ENCODE measurements at regions of chr10 and their contacts with region 1.

Region 1: DNA sequence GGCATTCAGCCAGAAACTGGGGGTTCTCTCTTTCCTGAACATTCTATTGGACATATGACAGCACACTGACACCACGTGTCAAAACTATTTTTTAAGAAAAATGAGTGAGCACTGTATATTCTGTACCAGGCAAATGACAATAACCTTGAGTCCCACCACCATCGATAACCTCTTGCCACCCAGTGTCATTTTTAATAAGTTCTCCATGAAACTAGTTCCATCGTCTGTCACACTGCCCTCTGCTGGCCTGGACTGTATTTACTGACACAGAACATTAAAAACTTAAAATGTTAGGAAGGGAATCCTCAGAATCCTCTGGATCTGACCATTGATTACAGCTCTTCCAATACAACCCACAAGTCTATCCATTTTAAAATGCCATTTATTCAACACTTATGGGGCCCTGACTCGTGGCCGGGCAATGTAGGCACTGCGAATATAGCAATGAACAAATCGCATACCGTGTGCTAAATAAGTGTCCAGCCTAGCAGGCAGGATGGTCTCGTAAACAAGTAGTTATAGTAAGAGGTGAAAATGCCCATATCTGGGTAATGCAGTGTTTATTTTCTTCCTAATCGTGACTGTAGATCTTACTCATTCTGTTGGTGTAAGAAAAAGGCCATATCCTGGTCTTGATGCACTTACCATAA is 35.9 kb upstream of the CACNB2 start:
- DNase-seq: peak in 1 of 2 donors; percentile 71
- H3K4me3 ChIP-seq: peak overlapping the region in 1 of 2 donors; percentile 37
- H3K27ac ChIP-seq: peak overlapping the region in 1 of 2 donors; percentile 23
- H3K4me1 ChIP-seq: no peaks in the 10 kb centered on the region
- H3K27me3 ChIP-seq: no peaks in the 10 kb centered on the region
- CTCF ChIP-seq: peak; percentile 67 to 78

Region 2: GRCh38 chr10:17607603-17608332 is 496.6 kb before region 1 on chr10:
- intact Hi-C with region 1: loop called (anchors 5 kb)
- DNase-seq: no peak
- H3K4me3 ChIP-seq: no peak overlapping the region
- H3K27ac ChIP-seq: peak overlapping the region in 1 of 2 donors; percentile 29
- H3K4me1 ChIP-seq: peaks cover 0 to 29% (median 0%) of the 10 kb centered on the region in 4 donors
- H3K27me3 ChIP-seq: no peaks in the 10 kb centered on the region
- CTCF ChIP-seq: peak; percentile 90 to 93

Region 3: DNA sequence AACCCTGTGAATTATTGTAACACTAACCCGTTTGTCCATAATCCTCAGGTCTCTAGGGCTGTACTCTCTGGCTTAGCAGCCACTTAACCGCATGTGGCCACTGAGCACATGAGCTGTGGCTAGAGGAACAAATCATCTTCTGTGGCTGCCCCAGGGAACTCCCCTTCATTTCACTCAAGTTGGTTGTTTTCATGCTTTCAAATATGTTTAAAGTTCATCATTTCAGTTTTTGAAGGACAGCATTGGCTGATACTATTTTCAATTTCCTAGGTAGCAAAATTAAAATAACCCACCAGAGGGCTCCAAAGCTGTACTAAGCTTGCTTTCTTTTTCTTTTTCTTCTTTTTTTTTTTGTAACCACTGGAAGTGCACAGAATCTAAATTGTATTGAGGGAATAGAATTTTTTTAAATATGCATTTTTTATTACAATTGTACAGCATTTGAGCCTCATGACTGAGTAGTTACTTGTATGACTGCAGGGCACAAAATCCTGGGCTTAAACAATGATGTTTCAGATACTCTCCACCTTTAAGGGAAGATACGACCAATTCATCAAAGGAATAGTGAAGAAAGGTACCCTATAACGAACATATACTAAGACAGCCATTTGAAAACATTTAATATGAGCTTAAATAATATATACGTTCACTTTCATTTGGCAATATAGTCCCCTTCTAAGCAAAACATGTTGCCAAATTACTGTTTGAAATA is 256.6 kb before region 1 on chr10:
- intact Hi-C with region 1: loop called (anchors 10 kb)
- DNase-seq: no peak
- H3K4me3 ChIP-seq: no peak overlapping the region
- H3K27ac ChIP-seq: no peak overlapping the region
- H3K4me1 ChIP-seq: no peaks in the 10 kb centered on the region
- H3K27me3 ChIP-seq: no peaks in the 10 kb centered on the region
- CTCF ChIP-seq: peak; percentile 41 to 44

Region 4: DNA sequence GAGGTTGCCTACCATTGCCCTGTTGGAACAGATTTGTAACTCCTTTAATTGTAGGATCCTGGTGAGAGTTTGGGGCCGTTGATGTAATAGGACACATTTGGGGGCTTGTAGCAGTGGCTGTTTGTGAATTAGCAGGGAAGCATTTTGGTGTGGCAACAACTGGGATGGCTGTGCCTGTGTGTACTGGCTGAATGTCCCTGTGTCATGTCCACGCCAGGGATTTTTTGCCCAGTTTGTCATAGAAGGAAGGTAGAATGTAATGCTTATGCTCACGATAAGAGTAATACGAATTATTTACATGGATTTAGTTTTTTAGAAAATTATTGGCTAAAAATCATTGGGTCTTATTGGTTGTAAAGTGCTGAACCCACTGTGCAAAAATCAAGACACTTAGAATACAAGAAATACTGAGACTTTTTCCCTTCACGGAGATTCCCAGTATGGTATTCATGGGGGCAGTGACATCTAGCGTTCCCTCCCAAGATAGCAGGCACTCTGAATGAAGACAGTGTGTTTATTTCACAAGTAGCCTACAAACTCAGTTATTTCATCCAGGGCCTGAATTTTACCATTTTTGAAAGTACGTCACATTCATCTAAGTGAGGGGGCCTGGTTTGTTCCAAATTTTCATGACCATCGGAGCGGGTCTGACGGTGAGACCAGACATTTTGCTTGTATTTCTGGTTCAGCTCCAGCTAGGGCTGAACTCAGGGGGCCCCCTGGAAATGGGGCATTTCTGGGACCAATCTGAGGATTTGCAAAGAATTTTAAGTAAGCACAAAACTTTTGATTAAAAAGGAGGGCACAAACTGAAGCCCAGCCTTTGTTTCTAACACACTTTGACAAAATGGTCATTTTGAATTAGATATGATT is 110.6 kb after region 1 on chr10:
- intact Hi-C with region 1: loop called (anchors 10 kb)
- DNase-seq: peak in 1 of 2 donors; percentile 53
- H3K4me3 ChIP-seq: no peak overlapping the region
- H3K27ac ChIP-seq: no peak overlapping the region
- H3K4me1 ChIP-seq: peaks cover 0 to 3% (median 0%) of the 10 kb centered on the region in 4 donors
- H3K27me3 ChIP-seq: no peaks in the 10 kb centered on the region
- CTCF ChIP-seq: peak; percentile 88 to 89